Naive thymus-derived CD4-positive, alpha-beta T cell (primary cell): ENCODE measurements at regions of chr12 and their contacts with region 1.

Region 1: GRCh38 chr12:75480469-75480949 is at the start of gene GLIPR1:
- DNase-seq: peak; percentile 54 to 83 (median 76)
- ATAC-seq: peak; percentile 86
- H3K4me3 ChIP-seq: peak within 1 kb of the TSS; percentile 82
- H3K4me3 Mint-ChIP-seq: peak within 1 kb of the TSS; percentile 86 to 99 (median 97)
- H3K27ac ChIP-seq: peak within 1 kb of the TSS; percentile 73
- H3K27ac Mint-ChIP-seq: peak within 1 kb of the TSS; percentile 92 to 100 (median 97)
- H3K4me1 ChIP-seq: peaks cover 49 to 54% of the 10 kb centered on the region in 2 donors
- H3K4me1 Mint-ChIP-seq: peaks cover 50 to 85% (median 75%) of the 10 kb centered on the region in 7 donors
- H3K27me3 ChIP-seq: no peaks in the 10 kb centered on the region
- H3K27me3 Mint-ChIP-seq: no peaks in the 10 kb centered on the region
- total RNA-seq, gene GLIPR1: 28.2 to 132 (median 48.7) TPM

Region 2: DNA sequence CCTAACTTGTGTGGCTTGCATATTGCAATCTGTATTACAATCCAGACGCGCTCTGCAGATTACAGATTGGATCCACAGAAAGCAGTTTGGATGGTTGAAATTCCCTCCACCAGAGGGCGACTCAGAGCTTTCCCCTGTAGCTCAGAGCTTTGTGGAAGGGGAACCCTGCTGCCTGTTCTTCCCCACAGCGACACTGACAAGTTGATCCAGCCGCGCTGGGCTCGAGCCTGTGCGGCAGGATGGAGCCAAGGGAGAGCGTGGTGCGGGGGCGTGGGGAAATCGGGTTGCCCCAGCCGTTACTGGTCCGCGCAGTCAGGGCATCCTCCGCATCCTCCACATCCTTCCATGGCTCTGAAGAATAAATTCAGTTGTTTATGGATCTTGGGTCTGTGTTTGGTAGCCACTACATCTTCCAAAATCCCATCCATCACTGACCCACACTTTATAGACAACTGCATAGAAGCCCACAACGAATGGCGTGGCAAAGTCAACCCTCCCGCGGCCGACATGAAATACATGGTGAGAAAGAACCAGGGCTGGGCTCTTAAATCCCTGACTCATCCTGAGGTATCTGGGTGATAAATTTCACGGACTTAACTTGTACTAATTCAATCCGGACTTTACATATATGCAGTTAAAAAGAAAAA is 146.0 kb before region 1 on chr12 and contains the start of gene GLIPR1L1:
- CTCF ChIA-PET with region 1: interaction called, 6 read pairs
- POLR2A ChIA-PET with region 1: interaction called, 5 read pairs
- intact Hi-C with region 1: loop called (anchors 1 to 2 kb)
- DNase-seq: peak; percentile 58 to 79 (median 74)
- ATAC-seq: peak; percentile 91
- H3K4me3 ChIP-seq: no peak within 1 kb of the TSS
- H3K4me3 Mint-ChIP-seq: peak within 1 kb of the TSS; percentile 18 to 80 (median 74)
- H3K27ac ChIP-seq: no peak within 1 kb of the TSS
- H3K27ac Mint-ChIP-seq: peak within 1 kb of the TSS in 1 of 9 donors; percentile 3
- H3K4me1 ChIP-seq: peaks cover 0 to 5% of the 10 kb centered on the region in 2 donors
- H3K4me1 Mint-ChIP-seq: peaks cover 11 to 29% (median 18%) of the 10 kb centered on the region in 7 donors
- H3K27me3 ChIP-seq: peaks cover 0 to 6% of the 10 kb centered on the region in 2 donors
- H3K27me3 Mint-ChIP-seq: peaks cover 16 to 56% (median 31%) of the 10 kb centered on the region in 5 donors
- total RNA-seq, gene GLIPR1L1: not detected

Region 3: GRCh38 chr12:75452675-75453330 is 27.7 kb before region 1 on chr12:
- CTCF ChIA-PET with region 1: interaction called, 6 read pairs
- POLR2A ChIA-PET with region 1: interaction called, 8 read pairs
- intact Hi-C with region 1: loop called (anchors 1 kb)
- DNase-seq: no peak
- ATAC-seq: no peak
- H3K4me3 ChIP-seq: no peak overlapping the region
- H3K4me3 Mint-ChIP-seq: no peak overlapping the region
- H3K27ac ChIP-seq: no peak overlapping the region
- H3K27ac Mint-ChIP-seq: no peak overlapping the region
- H3K4me1 ChIP-seq: peaks cover 12% of the 10 kb centered on the region in 2 donors
- H3K4me1 Mint-ChIP-seq: peaks cover 12 to 19% (median 15%) of the 10 kb centered on the region in 7 donors
- H3K27me3 ChIP-seq: no peaks in the 10 kb centered on the region
- H3K27me3 Mint-ChIP-seq: peaks cover 0 to 24% (median 0%) of the 10 kb centered on the region in 5 donors

Region 4: DNA sequence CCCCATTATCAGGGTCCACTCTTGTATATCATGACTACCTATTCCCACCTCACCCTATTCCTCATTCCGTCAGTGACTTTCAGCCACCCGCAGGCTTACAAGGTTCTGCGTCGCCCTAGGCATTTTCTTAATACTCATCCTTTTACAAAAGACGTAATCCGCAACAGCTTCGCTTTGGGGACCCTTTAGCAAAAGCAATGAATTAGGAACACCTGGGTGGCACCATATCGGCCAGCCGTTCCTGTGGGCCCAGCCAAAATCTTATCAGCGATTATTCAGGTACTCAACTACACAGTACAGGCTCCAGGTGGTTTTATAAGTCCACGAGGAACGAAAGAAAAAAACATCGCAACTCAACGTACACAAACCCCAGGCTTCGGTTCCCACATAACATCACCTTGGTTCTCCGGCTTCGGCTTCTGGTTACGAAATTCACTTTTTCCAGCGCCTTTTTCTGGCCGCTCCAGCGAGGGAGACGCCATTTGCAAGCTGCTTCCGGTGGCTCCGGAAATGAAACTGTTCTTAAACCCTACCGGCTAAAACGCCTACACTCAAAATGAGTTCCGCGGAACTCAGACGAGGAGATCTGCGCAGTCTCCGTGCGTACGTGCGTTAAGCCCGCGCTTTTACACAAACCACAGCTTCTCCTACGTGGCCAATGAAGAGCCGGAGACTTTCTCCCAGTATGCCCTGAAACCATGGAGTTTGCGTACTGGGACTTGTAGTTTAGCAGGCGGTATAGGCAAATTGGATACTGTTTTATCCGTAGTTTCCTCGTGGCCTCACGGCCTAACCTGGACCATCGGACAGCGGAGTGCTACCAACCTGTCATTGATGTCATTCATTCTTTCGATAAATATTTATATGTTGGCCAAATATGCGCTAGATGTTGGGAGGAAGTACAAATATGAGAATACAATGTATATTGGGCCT is 30.9 kb after region 1 on chr12 and contains the start of gene KRR1:
- CTCF ChIA-PET with region 1: interaction called, 19 read pairs
- POLR2A ChIA-PET with region 1: interaction called, 15 read pairs
- intact Hi-C with region 1: loop called (anchors 1 kb)
- DNase-seq: peak; percentile 60 to 93 (median 90)
- ATAC-seq: peak; percentile 98
- H3K4me3 ChIP-seq: peak within 1 kb of the TSS; percentile 90
- H3K4me3 Mint-ChIP-seq: peak within 1 kb of the TSS; percentile 96 to 100 (median 99)
- H3K27ac ChIP-seq: peak within 1 kb of the TSS; percentile 89
- H3K27ac Mint-ChIP-seq: peak within 1 kb of the TSS; percentile 96 to 100 (median 99)
- H3K4me1 ChIP-seq: peaks cover 13% of the 10 kb centered on the region in 2 donors
- H3K4me1 Mint-ChIP-seq: peaks cover 15 to 47% (median 38%) of the 10 kb centered on the region in 7 donors
- H3K27me3 ChIP-seq: no peaks in the 10 kb centered on the region
- H3K27me3 Mint-ChIP-seq: no peaks in the 10 kb centered on the region
- total RNA-seq, gene KRR1: 69.3 to 120 (median 74.3) TPM

Region 5: DNA sequence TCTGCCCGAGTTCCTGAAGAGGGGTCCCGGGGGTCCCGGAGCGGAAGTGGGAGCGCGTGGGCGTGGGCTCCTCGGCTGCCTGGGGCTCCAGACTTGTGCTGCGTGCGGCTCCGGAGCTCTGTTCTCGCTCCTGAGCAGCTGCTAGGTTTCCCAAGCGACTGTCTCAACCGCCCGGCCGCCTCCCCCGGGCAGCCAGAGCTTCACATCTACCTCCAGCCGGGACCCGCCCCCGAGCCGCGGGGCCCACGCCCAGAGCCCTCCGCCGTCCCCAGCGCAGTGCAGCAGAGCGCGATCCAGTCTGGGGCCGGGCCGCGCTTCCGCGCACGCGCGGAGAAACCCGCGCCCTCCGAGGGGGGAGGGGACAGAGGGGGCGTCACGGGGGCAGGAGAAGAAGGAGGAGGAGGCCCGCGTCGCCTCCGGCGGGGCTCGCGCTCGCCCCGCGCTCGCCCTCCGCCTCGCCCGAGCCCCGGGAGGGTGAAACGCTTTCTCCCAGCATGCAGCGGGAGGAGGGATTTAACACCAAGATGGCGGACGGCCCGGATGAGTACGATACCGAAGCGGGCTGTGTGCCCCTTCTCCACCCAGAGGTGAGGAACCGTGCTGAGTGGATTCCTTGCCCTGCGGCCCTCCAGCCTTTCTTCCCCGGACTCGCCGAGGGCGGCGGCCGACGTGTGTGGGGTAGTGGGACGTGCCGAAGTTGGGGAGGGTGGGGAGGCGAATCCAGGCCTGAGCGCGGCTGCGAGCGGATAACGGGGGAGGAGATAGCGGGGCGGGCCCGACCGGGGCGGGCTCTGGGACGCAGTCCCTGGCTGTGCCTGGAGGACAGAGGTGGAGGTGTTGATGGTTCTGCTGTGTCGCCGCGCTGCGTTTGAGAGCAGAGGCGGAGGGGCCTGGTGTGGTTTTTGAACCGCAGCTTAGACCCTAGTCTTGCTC is 1283.5 kb after region 1 on chr12 and contains the start of gene ZDHHC17:
- CTCF ChIA-PET with region 1: no interaction called
- POLR2A ChIA-PET with region 1: no interaction called
- intact Hi-C with region 1: loop called (anchors 10 kb)
- DNase-seq: peak; percentile 90 to 95 (median 93)
- ATAC-seq: peak; percentile 90
- H3K4me3 ChIP-seq: peak within 1 kb of the TSS; percentile 84
- H3K4me3 Mint-ChIP-seq: peak within 1 kb of the TSS; percentile 92 to 98 (median 97)
- H3K27ac ChIP-seq: peak within 1 kb of the TSS; percentile 94
- H3K27ac Mint-ChIP-seq: peak within 1 kb of the TSS; percentile 95 to 99 (median 97)
- H3K4me1 ChIP-seq: peaks cover 8 to 13% of the 10 kb centered on the region in 2 donors
- H3K4me1 Mint-ChIP-seq: peaks cover 17 to 57% (median 46%) of the 10 kb centered on the region in 7 donors
- H3K27me3 ChIP-seq: no peaks in the 10 kb centered on the region
- H3K27me3 Mint-ChIP-seq: peaks cover 0 to 13% (median 0%) of the 10 kb centered on the region in 5 donors
- total RNA-seq, gene ZDHHC17: 27.3 to 60.9 (median 56.3) TPM